ENCODE measurements at regions of chr5 and their contacts with region 1.

Region 1: DNA sequence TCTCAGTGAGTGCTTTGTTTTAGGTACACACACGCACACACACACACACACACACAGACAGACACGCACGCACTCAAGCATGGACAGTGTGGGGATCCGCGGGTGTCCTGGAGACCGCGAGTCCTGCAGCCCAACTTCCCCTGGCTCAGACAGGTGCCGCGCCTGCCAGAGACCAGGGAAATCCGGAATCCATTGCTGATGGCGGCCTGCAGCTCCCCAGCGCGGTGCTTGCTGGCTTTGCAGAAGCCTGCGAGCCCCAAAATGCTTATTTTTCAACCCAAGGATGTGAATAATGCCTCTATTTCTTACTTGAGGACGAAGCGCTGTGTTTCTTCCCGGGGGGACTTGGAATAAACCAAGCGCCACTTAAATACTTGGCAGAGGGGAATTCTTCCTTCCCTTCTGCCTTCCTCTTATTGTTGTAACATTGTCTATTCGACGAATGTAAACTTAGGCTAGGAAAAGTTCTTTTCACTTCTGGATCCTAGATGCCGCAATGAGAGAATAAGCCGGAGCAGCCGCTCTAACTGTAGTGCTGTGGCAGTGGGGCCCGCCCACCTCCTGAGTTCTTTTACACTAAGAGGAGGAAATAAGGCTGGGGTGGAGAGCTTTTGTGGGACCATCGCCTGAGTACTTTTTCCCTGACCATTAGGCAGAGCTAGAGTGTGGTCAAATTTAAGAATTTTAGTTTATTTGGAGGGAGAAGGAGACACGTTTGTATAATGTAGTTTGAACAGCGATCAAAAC is 802 bp downstream of the ITGA2 start:
- DNase-seq: peak in 1 of 2 experiments; percentile 31
- ATAC-seq: peak; percentile 75 to 76
- H3K4me3 ChIP-seq: peak overlapping the region; percentile 75
- H3K27ac ChIP-seq: peak overlapping the region; percentile 82 to 94
- H3K4me1 ChIP-seq: peaks cover 29% of the 10 kb centered on the region
- CTCF ChIP-seq: peak; percentile 45
- EP300 ChIP-seq: no peak
- POLR2A ChIP-seq: no peak
- RAD21 ChIP-seq: peak; percentile 41 to 57

Region 2: DNA sequence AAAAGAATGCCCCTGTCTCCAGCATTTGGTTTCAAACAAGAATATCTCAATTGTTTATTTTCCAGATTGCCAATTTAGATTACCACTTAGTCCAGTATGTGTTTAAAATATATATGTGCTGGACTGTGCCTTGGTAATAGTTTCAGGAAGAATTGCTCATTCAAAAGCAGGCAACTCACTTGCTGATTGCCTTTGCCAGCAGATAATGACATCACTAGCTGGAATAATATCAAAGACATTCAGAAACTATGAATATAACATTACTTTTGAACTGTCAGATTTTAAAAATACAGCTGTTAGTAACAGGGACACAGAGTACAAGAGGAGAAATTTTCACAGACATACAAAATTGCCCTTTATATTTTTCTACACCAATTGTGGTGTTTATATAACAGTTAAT is 96.8 kb before region 1 on chr5:
- CTCF ChIA-PET with region 1: no interaction called
- POLR2A ChIA-PET with region 1: no interaction called
- DNase-seq: no peak
- ATAC-seq: no peak; a peak in 1 of 6 replicates
- H3K4me3 ChIP-seq: no peak overlapping the region
- H3K27ac ChIP-seq: peak overlapping the region in 1 of 2 experiments; percentile 47; a peak in 1 of 6 replicates
- H3K4me1 ChIP-seq: peaks cover 19% of the 10 kb centered on the region
- CTCF ChIP-seq: no peak
- EP300 ChIP-seq: no peak
- POLR2A ChIP-seq: no peak
- RAD21 ChIP-seq: no peak

Region 3: DNA sequence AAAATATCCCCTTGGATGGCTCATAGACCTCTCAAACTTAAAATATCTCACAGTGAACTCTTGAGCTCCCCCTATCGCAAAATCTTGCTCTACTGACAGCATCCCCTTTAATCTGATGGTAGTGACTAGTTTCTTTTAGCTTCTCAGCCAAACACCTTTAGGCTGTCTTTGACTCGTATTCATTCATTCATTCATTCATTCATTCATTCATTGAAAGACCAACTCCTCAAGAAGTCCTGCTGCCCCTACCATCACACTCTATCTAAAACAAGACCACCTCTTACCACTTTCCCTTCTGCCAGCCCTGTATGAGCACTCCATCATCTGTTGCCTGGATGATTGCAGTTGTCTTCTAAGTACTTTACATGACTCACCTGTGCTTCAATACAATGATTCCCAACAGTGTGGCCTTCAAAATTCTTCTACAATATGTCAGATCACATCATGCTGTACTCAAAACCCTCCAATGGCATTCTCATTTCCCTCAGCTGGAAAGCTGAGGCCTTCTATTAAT is 46.0 kb after region 1 on chr5:
- CTCF ChIA-PET with region 1: interaction called, 43 read pairs
- POLR2A ChIA-PET with region 1: interaction called, 25 read pairs
- DNase-seq: peak; percentile 46 to 48
- ATAC-seq: peak; percentile 52 to 69; a peak in 3 of 6 replicates
- H3K4me3 ChIP-seq: no peak overlapping the region
- H3K27ac ChIP-seq: peak overlapping the region; percentile 46 to 70; a peak in 5 of 6 replicates
- H3K4me1 ChIP-seq: peaks cover 72% of the 10 kb centered on the region
- CTCF ChIP-seq: peak; percentile 48
- EP300 ChIP-seq: no peak
- POLR2A ChIP-seq: no peak
- RAD21 ChIP-seq: peak; percentile 22 to 41; a peak in 2 of 5 replicates

Region 4: GRCh38 chr5:53991942-53992341 is 1002.0 kb after region 1 on chr5:
- CTCF ChIA-PET with region 1: no interaction called
- POLR2A ChIA-PET with region 1: no interaction called
- DNase-seq: peak in 1 of 2 experiments; percentile 28
- ATAC-seq: no peak
- H3K4me3 ChIP-seq: no peak overlapping the region
- H3K27ac ChIP-seq: no peak overlapping the region
- H3K4me1 ChIP-seq: peaks cover 17% of the 10 kb centered on the region
- CTCF ChIP-seq: peak; percentile 22; the same call in 1 of the 3 replicates
- EP300 ChIP-seq: no peak
- POLR2A ChIP-seq: no peak
- RAD21 ChIP-seq: no peak; a peak in 1 of 5 replicates

Measured in A549 (cell line).